Right cardiac atrium (tissue), 5 donors: ENCODE measurements at regions of chr4 and their contacts with region 1.

Region 1: GRCh38 chr4:13665701-13666660 is 38.5 kb upstream of the BOD1L1 start:
- DNase-seq: no peak
- ATAC-seq: no peak
- H3K4me3 ChIP-seq: no peak overlapping the region
- H3K27ac ChIP-seq: no peak overlapping the region
- H3K4me1 ChIP-seq: no peaks in the 10 kb centered on the region
- H3K27me3 ChIP-seq: no peaks in the 10 kb centered on the region

Region 2: DNA sequence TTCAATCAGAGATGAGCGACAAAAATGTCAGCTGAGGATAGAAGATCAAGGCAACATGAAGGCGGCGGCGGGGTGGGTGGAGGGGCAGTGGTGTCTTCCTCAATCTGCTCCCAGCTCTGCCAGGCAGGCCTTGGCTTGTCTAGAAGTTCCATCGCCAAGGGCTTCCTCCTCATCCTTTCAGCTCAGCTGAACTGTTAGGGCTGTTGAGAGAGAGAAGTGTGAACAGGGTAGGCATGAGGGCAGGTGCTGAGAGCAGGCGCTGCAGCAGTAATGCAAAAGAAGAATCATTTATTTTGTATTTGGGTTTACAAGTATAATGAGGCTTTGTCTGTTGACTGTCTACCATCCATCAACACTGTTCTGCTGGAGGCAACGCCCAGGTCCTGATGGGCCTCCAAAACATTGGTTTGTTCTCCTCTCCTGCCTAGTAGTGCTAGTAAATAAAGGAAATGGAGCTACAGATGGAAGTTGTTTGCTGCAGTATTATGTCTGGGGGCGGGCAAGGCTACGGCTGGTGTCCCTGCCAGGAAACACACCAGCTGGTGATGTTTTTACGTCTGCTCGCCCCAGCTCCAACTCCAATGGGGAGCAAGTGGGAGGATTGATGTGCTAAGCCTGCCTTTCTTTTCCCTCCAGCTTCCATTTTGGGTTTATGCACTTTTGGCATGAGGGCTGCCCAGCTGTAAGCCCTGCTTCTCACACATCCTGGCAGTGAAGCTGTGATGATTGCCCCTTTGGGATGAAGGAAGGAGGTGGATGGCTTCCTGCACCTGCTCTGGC is 101.0 kb after region 1 on chr4:
- intact Hi-C with region 1: loop called in 1 of 4 experiments (anchors 5 kb)
- DNase-seq: peak in 1 of 3 donors; percentile 4
- ATAC-seq: no peak
- H3K4me3 ChIP-seq: no peak overlapping the region
- H3K27ac ChIP-seq: no peak overlapping the region
- H3K4me1 ChIP-seq: no peaks in the 10 kb centered on the region
- H3K27me3 ChIP-seq: no peaks in the 10 kb centered on the region

Region 3: GRCh38 chr4:13783800-13784411 is 117.9 kb after region 1 on chr4:
- intact Hi-C with region 1: no loop called
- DNase-seq: peak in 1 of 3 donors; percentile 12
- ATAC-seq: no peak
- H3K4me3 ChIP-seq: no peak overlapping the region
- H3K27ac ChIP-seq: no peak overlapping the region
- H3K4me1 ChIP-seq: no peaks in the 10 kb centered on the region
- H3K27me3 ChIP-seq: no peaks in the 10 kb centered on the region